HEK293 (cell line): ENCODE measurements at regions of chr11 and their contacts with region 1.

Region 1: DNA sequence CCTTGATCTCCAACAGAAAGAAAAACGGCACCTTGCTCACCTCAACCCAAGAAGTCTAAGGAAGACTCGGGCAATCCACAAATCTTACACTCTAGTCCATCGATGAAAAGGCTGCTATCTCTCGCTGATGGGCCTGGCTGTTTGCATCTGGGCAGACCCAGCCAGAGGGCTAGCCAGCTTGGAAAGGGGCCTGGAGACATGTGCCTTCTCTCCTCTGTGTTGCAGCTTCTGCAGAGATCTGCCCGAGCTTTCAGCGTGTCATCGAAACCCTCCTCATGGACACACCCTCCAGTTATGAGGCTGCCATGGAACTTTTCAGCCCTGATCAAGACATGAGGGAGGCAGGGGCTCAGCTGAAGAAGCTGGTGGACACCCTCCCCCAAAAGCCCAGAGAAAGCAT is 3.2 kb downstream of the SCGB1A1 start:
- H3K4me3 ChIP-seq: no peak overlapping the region
- H3K27ac ChIP-seq: no peak overlapping the region
- H3K4me1 ChIP-seq: peaks cover 3% of the 10 kb centered on the region
- CTCF ChIP-seq: no peak

Region 2: DNA sequence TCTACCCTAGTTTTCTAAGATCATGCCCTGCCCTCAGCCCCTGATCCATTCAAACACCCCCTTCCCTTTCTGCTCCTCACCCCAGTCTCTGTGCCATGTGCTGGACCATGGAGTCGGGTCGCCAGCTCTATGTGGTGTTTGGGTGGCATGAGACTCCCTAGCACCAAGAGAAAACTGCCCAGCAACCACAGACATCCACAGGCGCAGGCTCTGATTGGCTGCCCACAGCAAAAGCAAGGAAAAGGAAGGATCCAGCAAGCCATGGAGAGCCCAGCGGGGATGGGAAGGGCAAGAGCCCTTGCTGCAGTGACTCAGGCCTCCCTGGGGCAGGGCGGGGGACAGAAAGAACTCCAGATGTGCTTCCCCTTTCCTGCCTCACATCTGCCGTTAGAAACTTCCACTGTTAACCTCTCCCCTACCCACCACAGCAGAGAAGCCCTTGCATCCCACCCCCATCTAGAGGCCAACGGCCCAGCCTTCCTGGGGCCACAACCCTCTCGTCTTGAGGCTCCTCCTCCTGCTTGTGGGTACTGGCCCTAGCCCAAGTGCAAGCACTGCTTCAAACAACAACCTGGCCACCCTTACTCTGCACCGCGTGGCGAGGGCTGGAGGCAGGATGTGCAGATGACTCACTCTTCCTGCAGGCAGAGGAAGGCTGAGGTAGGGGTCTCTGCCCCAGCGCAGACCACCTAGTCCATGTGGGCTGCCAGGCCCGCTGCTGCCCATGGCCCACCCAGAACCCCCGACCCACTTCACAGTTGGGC is 134.3 kb after region 1 on chr11:
- CTCF ChIA-PET with region 1: interaction called, 80 read pairs
- POLR2A ChIA-PET with region 1: interaction called, 9 read pairs
- H3K4me3 ChIP-seq: no peak overlapping the region
- H3K27ac ChIP-seq: peak overlapping the region; percentile 53; the same call in 1 of the 2 replicates
- H3K4me1 ChIP-seq: peaks cover 6% of the 10 kb centered on the region; the same call in 1 of the 2 replicates
- CTCF ChIP-seq: no peak

Region 3: GRCh38 chr11:62721994-62722393 is 300.0 kb after region 1 on chr11:
- CTCF ChIA-PET with region 1: no interaction called
- POLR2A ChIA-PET with region 1: no interaction called
- H3K4me3 ChIP-seq: no peak overlapping the region
- H3K27ac ChIP-seq: no peak overlapping the region
- H3K4me1 ChIP-seq: no peaks in the 10 kb centered on the region
- CTCF ChIP-seq: 0 out of 2 replicates have a peak, but pooled peaks have one; percentile 8

Region 4: DNA sequence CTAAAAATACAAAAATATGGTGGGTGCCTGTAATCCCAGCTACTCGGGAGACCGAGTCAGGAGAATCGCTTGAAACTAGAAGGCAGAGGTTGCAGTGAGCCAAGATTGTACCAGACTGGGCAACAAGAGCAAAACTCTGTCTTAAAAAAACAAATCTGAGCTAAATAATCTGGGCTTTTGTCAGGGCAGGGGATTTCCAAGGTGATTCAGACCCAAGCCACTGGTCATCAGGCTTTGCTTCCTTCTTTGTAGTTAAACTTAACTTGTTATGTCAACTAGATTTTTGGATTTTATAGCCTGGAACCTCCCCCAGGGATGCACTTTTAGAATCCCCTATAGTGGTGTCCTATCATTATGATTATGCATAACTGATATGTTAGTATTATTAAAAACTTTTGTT is 620.6 kb after region 1 on chr11:
- CTCF ChIA-PET with region 1: no interaction called
- POLR2A ChIA-PET with region 1: no interaction called
- H3K4me3 ChIP-seq: no peak overlapping the region
- H3K27ac ChIP-seq: no peak overlapping the region
- H3K4me1 ChIP-seq: no peaks in the 10 kb centered on the region
- CTCF ChIP-seq: no peak